Heart left ventricle (tissue), 16 donors: ENCODE measurements at regions of chr9 and their contacts with region 1.

Region 1: DNA sequence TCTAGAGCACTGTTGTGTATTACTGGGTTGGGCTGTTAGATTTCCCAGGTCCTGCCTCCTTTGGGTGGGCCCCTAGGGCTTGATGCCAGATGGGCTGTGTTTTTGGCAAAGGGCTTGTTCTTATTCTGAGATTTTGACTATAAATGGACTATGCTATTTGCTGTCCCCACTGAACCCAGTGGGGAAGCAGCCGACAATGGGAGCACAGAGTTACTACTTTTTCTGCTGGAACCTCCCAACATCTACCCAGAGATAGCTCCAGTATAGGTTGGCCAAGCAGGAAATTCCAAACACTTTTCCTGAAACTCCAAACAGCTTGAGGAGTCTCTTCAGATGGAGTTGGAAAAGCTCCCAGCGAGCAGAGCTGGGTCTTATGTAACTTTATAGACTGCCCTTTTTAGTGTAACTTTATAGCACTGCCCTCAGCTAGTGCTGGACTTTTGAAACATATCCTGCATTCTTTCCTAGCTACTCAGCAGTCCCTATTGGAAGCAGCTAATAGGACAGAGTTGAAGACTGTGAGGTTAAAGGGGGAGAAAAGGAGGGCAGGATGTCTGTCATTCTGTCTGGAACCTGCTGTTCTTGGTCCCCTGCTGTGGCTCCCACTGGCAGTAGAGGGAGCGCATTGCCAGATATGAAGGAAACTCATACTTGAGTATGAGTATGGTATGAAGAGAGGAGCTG is 21.0 kb downstream of the RUSC2 start:
- DNase-seq: peak; percentile 77 to 89 (median 85)
- ATAC-seq: peak; percentile 89 to 96 (median 94)
- H3K4me3 ChIP-seq: peak overlapping the region in 4 of 12 donors; percentile 2 to 11 (median 8)
- H3K27ac ChIP-seq: peak overlapping the region; percentile 76 to 89 (median 84)
- H3K4me1 ChIP-seq: peaks cover 0 to 58% (median 32%) of the 10 kb centered on the region in 12 donors
- H3K27me3 ChIP-seq: no peaks in the 10 kb centered on the region
- CTCF ChIP-seq: peak in 11 of 12 donors; percentile 14 to 65 (median 46)
- POLR2A ChIP-seq: no peak

Region 2: DNA sequence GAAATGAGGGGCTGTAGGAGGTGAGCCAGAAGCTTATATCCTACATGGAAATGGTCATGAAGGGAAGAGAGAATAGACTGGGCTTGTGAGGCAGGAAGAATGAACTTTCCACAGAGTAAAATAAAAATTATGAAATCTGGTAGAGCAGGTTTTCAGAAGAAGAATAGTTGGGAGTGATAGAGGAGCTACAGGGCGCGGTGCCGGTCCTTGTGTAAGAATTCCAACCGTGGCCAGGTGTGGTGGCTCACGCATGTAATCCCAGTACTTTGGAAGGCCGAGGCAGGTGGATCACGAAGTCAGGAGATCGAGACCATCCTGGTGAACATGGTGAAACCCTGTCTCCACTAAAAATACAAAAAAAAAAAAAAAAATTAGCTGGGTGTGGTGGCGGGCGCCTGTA is 358.0 kb before region 1 on chr9:
- intact Hi-C with region 1: no loop called
- DNase-seq: no peak
- ATAC-seq: no peak
- H3K4me3 ChIP-seq: no peak overlapping the region
- H3K27ac ChIP-seq: no peak overlapping the region
- H3K4me1 ChIP-seq: no peaks in the 10 kb centered on the region
- H3K27me3 ChIP-seq: no peaks in the 10 kb centered on the region
- CTCF ChIP-seq: no peak
- POLR2A ChIP-seq: no peak

Region 3: GRCh38 chr9:35489313-35490154 is 21.4 kb before region 1 on chr9 and contains the start of gene RUSC2:
- intact Hi-C with region 1: loop called in 1 of 10 experiments (anchors 2 kb)
- DNase-seq: peak; percentile 87 to 92 (median 91)
- ATAC-seq: peak; percentile 78 to 90 (median 87)
- H3K4me3 ChIP-seq: peak within 1 kb of the TSS; percentile 53 to 97 (median 86)
- H3K27ac ChIP-seq: peak within 1 kb of the TSS; percentile 87 to 98 (median 96)
- H3K4me1 ChIP-seq: peaks cover 5 to 40% (median 31%) of the 10 kb centered on the region in 12 donors
- H3K27me3 ChIP-seq: no peaks in the 10 kb centered on the region
- CTCF ChIP-seq: peak; percentile 17 to 64 (median 46)
- POLR2A ChIP-seq: peak in 1 of 2 donors; percentile 79
- total RNA-seq, gene RUSC2: 23.0 to 56.1 (median 30.5) TPM

Region 4: DNA sequence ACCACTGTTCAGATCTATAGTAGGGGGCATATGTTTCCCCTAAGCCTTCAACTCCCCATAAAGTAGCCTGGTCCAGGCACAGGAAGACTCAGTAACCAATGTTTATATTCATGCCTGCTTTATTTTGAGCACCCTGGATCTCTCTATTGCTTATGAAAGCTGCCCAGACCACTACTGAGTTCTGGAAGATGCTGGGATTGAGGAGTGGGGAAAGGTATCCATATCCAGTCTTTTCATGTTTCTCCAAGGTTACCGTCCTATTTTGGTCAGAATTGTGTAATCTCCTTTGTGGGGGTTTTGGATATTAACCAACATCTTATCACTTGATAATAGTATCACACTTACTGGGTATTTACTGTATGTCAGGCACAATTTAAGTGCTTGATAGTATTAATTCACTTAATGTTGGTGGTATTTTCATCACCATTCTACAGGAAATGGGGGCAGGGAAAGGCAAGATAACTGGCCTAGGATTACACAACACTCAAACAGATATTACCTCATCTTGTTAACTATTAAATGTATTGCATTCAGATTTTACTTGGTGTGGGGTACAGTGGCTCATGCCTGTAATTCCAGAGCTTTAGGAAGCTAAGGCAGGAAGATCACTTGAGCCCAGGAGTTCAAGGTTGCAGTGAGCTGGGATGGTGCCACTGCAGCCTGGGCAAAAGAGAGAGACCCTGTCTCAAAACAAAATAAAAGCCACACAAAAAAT is 15.4 kb after region 1 on chr9:
- intact Hi-C with region 1: no loop called
- DNase-seq: no peak
- ATAC-seq: peak in 3 of 4 donors; percentile 27 to 63 (median 46)
- H3K4me3 ChIP-seq: no peak overlapping the region
- H3K27ac ChIP-seq: peak overlapping the region in 8 of 12 donors; percentile 2 to 76 (median 44)
- H3K4me1 ChIP-seq: peaks cover 0 to 55% (median 35%) of the 10 kb centered on the region in 12 donors
- H3K27me3 ChIP-seq: no peaks in the 10 kb centered on the region
- CTCF ChIP-seq: no peak
- POLR2A ChIP-seq: no peak

Region 5: DNA sequence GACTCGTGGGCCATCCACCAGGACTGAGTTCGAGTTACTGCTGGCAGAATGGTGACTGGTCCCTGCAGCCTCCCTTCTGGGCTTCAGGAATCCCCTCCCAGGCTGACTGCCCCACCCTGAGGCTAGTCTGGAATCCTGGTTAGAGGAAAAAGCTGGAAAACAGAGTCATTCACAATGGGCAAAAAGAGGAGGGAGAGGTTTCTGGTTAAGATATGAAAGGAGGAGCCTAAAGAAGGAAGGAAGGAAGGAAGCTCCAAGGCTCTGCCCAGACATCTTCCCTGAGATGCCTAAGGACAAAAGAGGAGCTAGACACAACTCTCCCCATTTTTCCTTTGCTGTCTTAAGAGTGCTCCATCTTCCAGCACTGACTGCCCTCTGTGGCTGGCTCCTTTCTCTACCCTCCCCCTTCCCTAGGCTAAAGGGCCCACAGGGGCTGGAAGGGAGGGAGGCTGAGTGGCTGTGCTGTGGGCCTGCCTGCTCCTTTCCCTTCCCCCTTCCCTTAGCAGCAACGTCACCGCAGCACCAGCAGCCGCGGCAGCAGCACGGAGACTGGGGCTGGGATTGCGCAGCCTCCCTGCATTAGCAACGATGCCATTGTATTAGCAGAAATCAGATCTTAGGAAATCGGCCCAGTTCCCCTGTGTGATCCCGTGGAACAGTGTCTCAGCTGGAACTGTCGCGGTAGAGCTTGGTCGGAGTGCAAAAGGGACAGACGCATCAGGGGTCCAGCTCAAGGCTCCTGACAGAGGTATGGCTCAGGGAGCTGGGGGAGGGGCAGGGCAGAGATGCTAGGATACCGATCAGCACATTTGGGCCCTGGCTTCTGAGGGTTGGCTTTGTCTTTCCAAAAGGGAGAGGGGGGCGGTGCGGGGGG is 27.7 kb after region 1 on chr9:
- intact Hi-C with region 1: loop called in 3 of 10 experiments (anchors 1 to 2 kb)
- DNase-seq: peak; percentile 75 to 84 (median 80)
- ATAC-seq: peak; percentile 81 to 90 (median 86)
- H3K4me3 ChIP-seq: peak overlapping the region; percentile 16 to 65 (median 54)
- H3K27ac ChIP-seq: peak overlapping the region; percentile 85 to 94 (median 90)
- H3K4me1 ChIP-seq: peaks cover 7 to 70% (median 59%) of the 10 kb centered on the region in 12 donors
- H3K27me3 ChIP-seq: no peaks in the 10 kb centered on the region
- CTCF ChIP-seq: no peak
- POLR2A ChIP-seq: peak in 1 of 2 donors; percentile 23

Region 6: DNA sequence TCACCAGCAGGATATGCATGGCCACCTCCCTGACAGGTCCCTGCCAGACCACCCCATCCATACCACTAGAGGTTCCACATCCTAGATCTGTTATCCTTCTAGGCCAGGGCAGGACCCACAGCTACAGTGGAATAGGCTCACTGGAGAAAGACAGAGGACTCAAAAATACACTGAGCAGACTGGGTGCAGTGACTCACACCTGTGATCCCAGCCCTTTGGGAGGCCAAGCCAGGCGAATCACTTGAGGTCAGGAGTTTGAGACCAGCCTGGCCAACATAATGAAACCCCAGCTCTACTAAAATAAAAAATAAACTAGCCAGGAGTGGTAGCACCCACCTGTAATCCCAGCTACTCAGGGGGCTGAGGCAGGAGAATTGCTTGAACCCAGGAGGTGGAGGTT is 37.7 kb after region 1 on chr9:
- intact Hi-C with region 1: loop called in 5 of 10 experiments (anchors 5 kb)
- DNase-seq: no peak
- ATAC-seq: no peak
- H3K4me3 ChIP-seq: no peak overlapping the region
- H3K27ac ChIP-seq: peak overlapping the region in 1 of 12 donors; percentile 4
- H3K4me1 ChIP-seq: peaks cover 3 to 82% (median 29%) of the 10 kb centered on the region in 12 donors
- H3K27me3 ChIP-seq: no peaks in the 10 kb centered on the region
- CTCF ChIP-seq: no peak
- POLR2A ChIP-seq: no peak